H1 (cell line): ENCODE measurements at regions of chr2 and their contacts with region 1.

Region 1: GRCh38 chr2:620471-621302 is 56.5 kb downstream of the TMEM18 start:
- DNase-seq: peak in 1 of 2 experiments; percentile 43
- H3K4me3 ChIP-seq: no peak overlapping the region
- H3K27ac ChIP-seq: no peak overlapping the region
- H3K4me1 ChIP-seq: no peaks in the 10 kb centered on the region
- H3K27me3 ChIP-seq: no peaks in the 10 kb centered on the region
- CTCF ChIP-seq: no peak
- EP300 ChIP-seq: no peak
- POLR2A ChIP-seq: no peak
- RAD21 ChIP-seq: no peak

Region 2: DNA sequence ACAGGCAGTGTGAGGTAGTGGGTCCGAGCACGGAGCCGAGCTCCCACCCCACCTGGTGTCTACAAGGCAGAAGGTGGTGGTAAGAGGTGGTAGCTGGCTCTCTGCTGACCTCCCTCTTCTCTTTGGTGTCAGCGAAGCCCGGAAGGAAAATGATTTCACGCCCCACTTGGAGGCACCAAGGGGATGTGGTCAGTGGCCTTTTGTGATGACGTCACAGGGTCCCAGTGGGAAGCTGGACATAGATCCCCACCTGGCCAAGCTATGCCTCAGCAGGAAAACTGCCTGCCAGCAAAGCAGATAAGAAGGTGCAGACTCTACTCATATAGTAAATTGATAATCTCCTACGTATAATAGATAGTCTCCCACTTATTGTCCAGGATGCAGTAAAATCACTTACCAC is 149.1 kb before region 1 on chr2:
- CTCF ChIA-PET with region 1: no interaction called
- POLR2A ChIA-PET with region 1: no interaction called
- DNase-seq: no peak
- H3K4me3 ChIP-seq: no peak overlapping the region
- H3K27ac ChIP-seq: no peak overlapping the region
- H3K4me1 ChIP-seq: peaks cover 0 to 3% (median 1%) of the 10 kb centered on the region in 4 experiments; a peak in 3 of 7 replicates
- H3K27me3 ChIP-seq: peaks cover 8 to 34% (median 30%) of the 10 kb centered on the region in 4 experiments
- CTCF ChIP-seq: no peak
- EP300 ChIP-seq: no peak
- POLR2A ChIP-seq: no peak
- RAD21 ChIP-seq: no peak

Region 3: GRCh38 chr2:636641-637405 is 16.1 kb after region 1 on chr2:
- CTCF ChIA-PET with region 1: interaction called, 12 read pairs
- POLR2A ChIA-PET with region 1: no interaction called
- DNase-seq: peak; percentile 31 to 90
- H3K4me3 ChIP-seq: no peak overlapping the region
- H3K27ac ChIP-seq: no peak overlapping the region
- H3K4me1 ChIP-seq: no peaks in the 10 kb centered on the region
- H3K27me3 ChIP-seq: peaks cover 8 to 13% (median 12%) of the 10 kb centered on the region in 4 experiments
- CTCF ChIP-seq: peak; percentile 30 to 82 (median 79)
- EP300 ChIP-seq: peak in 1 of 2 experiments; percentile 46; a peak in 1 of 3 replicates
- POLR2A ChIP-seq: no peak
- RAD21 ChIP-seq: peak; percentile 85 to 93